ENCODE measurements at regions of chr22 and their contacts with region 1.

Region 1: GRCh38 chr22:27885977-27886842 is 32.8 kb downstream of the PITPNB start:
- DNase-seq: peak in 1 of 2 donors; percentile 67
- ATAC-seq: peak; percentile 57 to 73 (median 65)
- H3K4me3 ChIP-seq: no peak overlapping the region
- H3K4me3 Mint-ChIP-seq: no peak overlapping the region
- H3K27ac ChIP-seq: no peak overlapping the region
- H3K27ac Mint-ChIP-seq: peak overlapping the region in 1 of 2 donors; percentile 50
- H3K4me1 ChIP-seq: no peaks in the 10 kb centered on the region
- H3K4me1 Mint-ChIP-seq: peaks cover 0 to 5% of the 10 kb centered on the region in 2 donors
- H3K27me3 ChIP-seq: no peaks in the 10 kb centered on the region
- H3K27me3 Mint-ChIP-seq: no peaks in the 10 kb centered on the region
- CTCF ChIP-seq: peak; percentile 96

Region 2: GRCh38 chr22:28009272-28009827 is 123.1 kb after region 1 on chr22:
- intact Hi-C with region 1: loop called (anchors 1 kb)
- DNase-seq: peak; percentile 47 to 83
- ATAC-seq: peak; percentile 62 to 89 (median 67)
- H3K4me3 ChIP-seq: no peak overlapping the region
- H3K4me3 Mint-ChIP-seq: no peak overlapping the region
- H3K27ac ChIP-seq: no peak overlapping the region
- H3K27ac Mint-ChIP-seq: no peak overlapping the region
- H3K4me1 ChIP-seq: no peaks in the 10 kb centered on the region
- H3K4me1 Mint-ChIP-seq: peaks cover 0 to 7% of the 10 kb centered on the region in 2 donors
- H3K27me3 ChIP-seq: no peaks in the 10 kb centered on the region
- H3K27me3 Mint-ChIP-seq: no peaks in the 10 kb centered on the region
- CTCF ChIP-seq: peak; percentile 94